ENCODE measurements at regions of chr22 and their contacts with region 1.

Region 1: GRCh38 chr22:24503137-24503842 is 8.2 kb downstream of the UPB1 start:
- DNase-seq: peak; percentile 34
- ATAC-seq: peak; percentile 97
- H3K4me3 ChIP-seq: no peak overlapping the region
- H3K27ac ChIP-seq: no peak overlapping the region
- H3K4me1 ChIP-seq: peaks cover 0 to 5% of the 10 kb centered on the region in 2 experiments; a peak in 1 of 4 replicates
- H3K27me3 ChIP-seq: no peaks in the 10 kb centered on the region
- CTCF ChIP-seq: peak; percentile 70 to 83 (median 79); a peak in 5 of 6 replicates
- POLR2A ChIP-seq: no peak
- RAD21 ChIP-seq: peak; percentile 79

Region 2: DNA sequence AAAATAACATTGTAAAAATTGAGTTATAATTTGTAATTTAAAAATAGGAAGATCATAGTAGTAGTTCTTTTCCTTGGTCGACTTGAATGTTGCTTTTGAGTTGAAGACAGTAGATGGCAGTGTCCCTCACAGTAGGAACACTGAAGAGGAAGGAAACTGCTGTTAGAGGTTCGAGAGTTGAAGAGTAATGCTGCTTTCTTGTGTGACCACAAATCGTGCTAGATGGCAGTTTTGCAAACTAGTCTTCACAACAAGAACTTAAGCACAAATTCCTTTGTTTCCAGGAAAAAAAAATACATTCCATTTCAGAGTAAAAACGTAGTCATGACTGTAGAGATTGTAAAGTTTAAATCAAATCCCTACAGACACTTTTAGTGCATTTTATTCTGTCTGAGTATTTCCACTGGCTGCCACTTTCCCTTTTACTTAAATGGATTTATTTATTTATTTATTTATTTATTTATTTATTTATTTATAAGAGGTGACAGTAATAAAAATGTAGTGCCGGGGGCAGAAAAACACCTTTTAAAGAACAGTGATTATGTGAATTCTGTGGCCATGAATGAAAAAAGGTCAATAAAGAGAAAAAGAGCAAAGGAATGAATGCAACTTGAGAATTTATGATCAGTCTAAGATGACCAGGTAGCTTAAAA is 178.1 kb before region 1 on chr22:
- CTCF ChIA-PET with region 1: interaction called, 3 read pairs
- POLR2A ChIA-PET with region 1: no interaction called
- RAD21 ChIA-PET with region 1: no interaction called
- intact Hi-C with region 1: loop called (anchors 1 kb)
- DNase-seq: no peak
- ATAC-seq: peak; percentile 65
- H3K4me3 ChIP-seq: no peak overlapping the region
- H3K27ac ChIP-seq: no peak overlapping the region
- H3K4me1 ChIP-seq: no peaks in the 10 kb centered on the region
- H3K27me3 ChIP-seq: no peaks in the 10 kb centered on the region
- CTCF ChIP-seq: peak; percentile 43 to 58 (median 44); a peak in 5 of 6 replicates
- POLR2A ChIP-seq: no peak
- RAD21 ChIP-seq: peak; percentile 60

Region 3: GRCh38 chr22:24423519-24424000 is 79.7 kb before region 1 on chr22:
- CTCF ChIA-PET with region 1: interaction called, 23 read pairs
- POLR2A ChIA-PET with region 1: no interaction called
- RAD21 ChIA-PET with region 1: no interaction called
- intact Hi-C with region 1: loop called (anchors 1 kb)
- DNase-seq: no peak
- ATAC-seq: peak; percentile 85
- H3K4me3 ChIP-seq: peak overlapping the region; percentile 40 to 59
- H3K27ac ChIP-seq: no peak overlapping the region
- H3K4me1 ChIP-seq: peaks cover 0 to 4% of the 10 kb centered on the region in 2 experiments; a peak in 2 of 4 replicates
- H3K27me3 ChIP-seq: no peaks in the 10 kb centered on the region
- CTCF ChIP-seq: peak; percentile 30 to 71 (median 62); a peak in 5 of 6 replicates
- POLR2A ChIP-seq: no peak
- RAD21 ChIP-seq: no peak; the same call in none of the 2 replicates

Region 4: DNA sequence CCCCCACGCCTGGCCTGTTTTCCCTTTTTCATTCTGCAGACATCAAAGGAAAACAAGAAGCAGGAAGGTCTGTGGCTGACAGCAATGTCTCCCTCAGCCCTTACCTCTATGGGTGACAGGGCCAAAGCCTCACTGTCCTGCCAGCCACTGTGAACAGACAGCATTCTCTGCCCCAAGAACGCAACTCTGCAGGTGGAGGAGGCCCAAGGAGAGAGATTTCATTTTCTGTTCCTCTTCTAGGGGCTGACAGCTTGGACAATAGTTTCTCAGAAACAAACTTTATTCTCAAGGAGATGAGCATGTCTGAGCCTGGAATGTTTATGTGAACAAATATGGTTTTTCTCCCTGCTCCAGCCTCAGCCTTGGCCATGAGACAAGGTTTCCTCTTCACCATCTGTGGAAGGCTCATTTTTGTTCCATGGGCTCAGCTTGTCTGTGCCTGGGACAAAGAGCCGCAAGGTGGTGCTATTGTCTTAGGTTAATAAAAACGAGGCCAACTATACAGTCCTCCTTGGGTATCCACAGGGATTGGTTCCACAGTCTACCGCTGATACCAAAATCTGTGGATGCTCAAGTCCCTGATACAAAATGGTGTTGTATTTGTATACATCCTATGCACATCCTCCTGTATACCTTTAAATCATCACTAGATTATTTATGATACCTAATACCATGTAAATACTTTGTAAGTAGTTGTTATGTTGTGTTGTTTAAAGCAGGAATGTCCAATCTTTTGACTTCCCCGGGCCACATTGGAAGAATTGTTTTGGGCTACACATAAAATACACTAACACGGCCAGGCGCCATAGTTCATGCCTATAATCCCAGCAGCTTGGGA is 265.5 kb after region 1 on chr22:
- CTCF ChIA-PET with region 1: no interaction called
- POLR2A ChIA-PET with region 1: no interaction called
- RAD21 ChIA-PET with region 1: no interaction called
- intact Hi-C with region 1: no loop called
- DNase-seq: peak; percentile 54
- ATAC-seq: peak; percentile 86
- H3K4me3 ChIP-seq: no peak overlapping the region
- H3K27ac ChIP-seq: no peak overlapping the region
- H3K4me1 ChIP-seq: no peaks in the 10 kb centered on the region
- H3K27me3 ChIP-seq: no peaks in the 10 kb centered on the region
- CTCF ChIP-seq: peak; percentile 66 to 85 (median 84); a peak in 5 of 6 replicates
- POLR2A ChIP-seq: no peak
- RAD21 ChIP-seq: peak; percentile 78